ENCODE measurements at regions of chr9 and their contacts with region 1.

Region 1: GRCh38 chr9:87991141-87991870 is 17.0 kb upstream of the CDK20 start:
- DNase-seq: no peak
- ATAC-seq: no peak
- H3K4me3 ChIP-seq: no peak overlapping the region
- H3K27ac ChIP-seq: no peak overlapping the region
- H3K4me1 ChIP-seq: no peaks in the 10 kb centered on the region
- H3K27me3 ChIP-seq: peaks cover 4% of the 10 kb centered on the region; the same call in 1 of the 2 replicates
- CTCF ChIP-seq: no peak

Region 2: GRCh38 chr9:88007206-88007631 is 15.9 kb after region 1 on chr9:
- CTCF ChIA-PET with region 1: interaction called, 10 read pairs
- POLR2A ChIA-PET with region 1: no interaction called
- intact Hi-C with region 1: loop called (anchors 1 kb)
- DNase-seq: no peak
- ATAC-seq: no peak
- H3K4me3 ChIP-seq: no peak overlapping the region
- H3K27ac ChIP-seq: no peak overlapping the region
- H3K4me1 ChIP-seq: no peaks in the 10 kb centered on the region
- H3K27me3 ChIP-seq: no peaks in the 10 kb centered on the region
- CTCF ChIP-seq: no peak

Region 3: GRCh38 chr9:88056876-88057275 is 65.6 kb after region 1 on chr9:
- CTCF ChIA-PET with region 1: no interaction called
- POLR2A ChIA-PET with region 1: no interaction called
- intact Hi-C with region 1: no loop called
- DNase-seq: peak; percentile 62
- ATAC-seq: no peak
- H3K4me3 ChIP-seq: no peak overlapping the region
- H3K27ac ChIP-seq: no peak overlapping the region
- H3K4me1 ChIP-seq: no peaks in the 10 kb centered on the region
- H3K27me3 ChIP-seq: no peaks in the 10 kb centered on the region
- CTCF ChIP-seq: no peak